ENCODE measurements at regions of chr6 and their contacts with region 1.

Region 1: DNA sequence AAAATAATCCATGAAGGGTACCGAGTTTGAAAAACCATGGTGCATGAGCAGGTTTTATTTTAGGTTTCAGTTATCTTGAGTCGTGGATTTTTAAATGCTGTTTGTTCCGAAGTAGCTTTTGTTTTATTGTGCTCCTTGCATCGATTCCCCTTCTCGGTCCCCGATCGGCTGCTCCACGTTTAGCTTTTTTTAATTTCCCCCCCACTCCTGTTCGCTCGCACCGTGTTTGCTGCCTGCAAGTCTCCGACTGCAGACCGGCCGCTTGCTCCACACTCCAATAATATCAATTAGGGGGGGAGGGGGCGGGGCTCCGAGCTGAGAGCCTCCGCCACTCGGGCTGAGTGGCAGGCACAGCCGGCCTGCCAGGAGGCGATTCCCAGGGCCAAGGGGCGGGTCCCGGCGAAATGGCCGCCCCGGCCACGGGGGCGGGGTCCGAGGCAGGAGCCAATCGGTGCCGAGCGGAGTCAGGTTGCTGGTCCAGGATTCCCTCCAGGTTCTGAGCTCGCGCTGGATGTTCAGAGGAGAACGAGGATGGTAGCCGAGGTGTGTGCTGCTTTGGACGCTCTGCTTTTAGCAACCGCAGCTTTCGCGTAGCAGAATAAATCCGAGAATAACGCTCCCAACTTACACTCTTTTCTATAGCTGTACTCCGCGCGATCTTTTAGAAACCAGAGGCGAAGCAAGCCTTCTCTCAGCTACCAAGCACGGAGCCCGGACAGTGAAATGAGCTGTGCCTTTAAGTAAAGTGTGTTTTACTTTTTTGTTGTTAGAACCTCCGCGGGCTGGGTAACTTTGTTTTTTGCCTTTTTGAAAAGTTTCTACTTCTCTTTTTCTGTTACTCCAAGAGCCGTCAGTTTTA is at the start of gene EPHA7:
- DNase-seq: peak; percentile 96
- H3K4me3 ChIP-seq: peak within 1 kb of the TSS; percentile 50 to 52
- H3K27ac ChIP-seq: peak within 1 kb of the TSS; percentile 70 to 72
- H3K4me1 ChIP-seq: no peaks in the 10 kb centered on the region
- H3K27me3 ChIP-seq: no peaks in the 10 kb centered on the region
- CTCF ChIP-seq: no peak
- POLR2A ChIP-seq: peak; percentile 20
- total RNA-seq, gene EPHA7: 5.9 to 8.7 TPM

Region 2: DNA sequence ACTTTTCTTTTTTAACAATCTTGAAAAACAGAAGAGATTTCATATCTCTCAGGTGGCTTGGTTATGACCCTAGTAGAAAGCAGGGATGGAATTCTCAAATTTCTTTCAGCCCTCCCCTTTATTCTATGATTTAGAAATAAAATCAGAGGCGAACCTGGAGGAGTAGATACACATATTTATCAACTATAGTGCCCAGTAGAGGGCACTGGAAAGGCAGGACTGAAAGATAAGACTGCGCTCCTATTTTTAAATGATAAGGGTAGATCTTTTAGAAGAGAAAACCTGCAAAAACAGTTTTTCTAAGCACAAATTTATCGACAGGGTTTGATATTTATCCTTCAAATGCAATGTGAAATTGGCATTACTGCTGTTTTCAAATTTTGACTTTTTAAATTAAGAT is 1296.8 kb before region 1 on chr6:
- intact Hi-C with region 1: loop called (anchors 5 kb)
- DNase-seq: no peak
- H3K4me3 ChIP-seq: no peak overlapping the region
- H3K27ac ChIP-seq: no peak overlapping the region
- H3K4me1 ChIP-seq: no peaks in the 10 kb centered on the region
- H3K27me3 ChIP-seq: no peaks in the 10 kb centered on the region
- CTCF ChIP-seq: peak in 3 of 4 experiments; percentile 8 to 15 (median 9)
- POLR2A ChIP-seq: no peak

Region 3: DNA sequence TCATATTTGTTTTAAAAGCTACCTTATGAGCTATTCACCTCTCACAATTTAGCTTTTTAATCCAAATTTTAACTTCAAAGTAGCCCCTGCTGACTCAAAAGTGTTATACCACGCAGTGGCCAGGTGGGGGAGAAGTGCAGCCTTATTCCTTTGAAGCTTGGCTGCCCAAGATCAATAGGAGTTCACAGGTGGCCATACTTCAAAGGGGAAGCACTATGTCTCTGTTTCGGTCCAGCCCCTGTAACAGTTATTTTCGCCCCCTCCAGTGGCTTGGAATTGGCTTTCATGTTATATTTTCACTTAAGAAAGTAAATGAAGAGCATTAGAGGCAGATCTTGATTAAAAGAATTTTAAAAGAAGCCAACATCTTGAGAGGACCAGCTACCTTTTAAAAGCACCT is 608.6 kb before region 1 on chr6:
- intact Hi-C with region 1: loop called (anchors 2 kb)
- DNase-seq: peak; percentile 16
- H3K4me3 ChIP-seq: no peak overlapping the region
- H3K27ac ChIP-seq: no peak overlapping the region
- H3K4me1 ChIP-seq: no peaks in the 10 kb centered on the region
- H3K27me3 ChIP-seq: no peaks in the 10 kb centered on the region
- CTCF ChIP-seq: peak in 3 of 4 experiments; percentile 36 to 59 (median 41)
- POLR2A ChIP-seq: no peak

Region 4: DNA sequence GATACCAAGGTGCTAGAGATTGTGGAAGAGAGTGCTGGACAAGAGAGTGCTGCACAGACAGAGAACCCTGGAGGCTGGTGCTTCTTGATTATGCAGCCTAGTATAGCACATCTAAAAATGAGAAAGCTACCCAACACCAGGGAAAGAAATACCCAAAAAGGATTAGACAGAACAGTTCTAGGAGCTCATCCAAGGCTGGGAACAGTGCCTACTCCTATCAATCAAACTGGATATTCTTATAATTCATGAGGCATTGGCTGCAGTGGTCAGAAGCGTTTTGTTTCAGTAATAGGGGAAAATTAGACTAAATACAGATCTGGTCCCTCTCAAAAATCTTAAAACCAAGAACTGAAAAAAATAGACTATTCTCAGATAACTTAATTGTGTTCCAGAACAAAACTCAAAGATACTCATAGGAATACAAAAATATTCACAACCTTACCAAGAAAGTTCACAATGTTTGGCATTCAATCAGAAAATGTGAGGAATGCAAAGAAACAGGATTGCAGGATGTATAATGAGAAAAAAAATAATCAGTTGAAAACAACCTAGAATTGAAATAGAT is 223.0 kb before region 1 on chr6:
- intact Hi-C with region 1: loop called (anchors 10 kb)
- DNase-seq: no peak
- H3K4me3 ChIP-seq: no peak overlapping the region
- H3K27ac ChIP-seq: no peak overlapping the region
- H3K4me1 ChIP-seq: no peaks in the 10 kb centered on the region
- H3K27me3 ChIP-seq: no peaks in the 10 kb centered on the region
- CTCF ChIP-seq: no peak
- POLR2A ChIP-seq: no peak

Region 5: GRCh38 chr6:94045099-94045829 is 625.7 kb after region 1 on chr6:
- intact Hi-C with region 1: loop called (anchors 10 kb)
- DNase-seq: no peak
- H3K4me3 ChIP-seq: no peak overlapping the region
- H3K27ac ChIP-seq: peak overlapping the region; percentile 4 to 49
- H3K4me1 ChIP-seq: peaks cover 3% of the 10 kb centered on the region
- H3K27me3 ChIP-seq: no peaks in the 10 kb centered on the region
- CTCF ChIP-seq: no peak
- POLR2A ChIP-seq: no peak

Region 6: GRCh38 chr6:94071835-94072234 is 652.3 kb after region 1 on chr6:
- intact Hi-C with region 1: loop called (anchors 10 kb)
- DNase-seq: no peak
- H3K4me3 ChIP-seq: no peak overlapping the region
- H3K27ac ChIP-seq: no peak overlapping the region
- H3K4me1 ChIP-seq: no peaks in the 10 kb centered on the region
- H3K27me3 ChIP-seq: no peaks in the 10 kb centered on the region
- CTCF ChIP-seq: no peak
- POLR2A ChIP-seq: no peak

Measured in prostate gland (tissue), 2 donors.